Cardiac septum (tissue), 1 donor: ENCODE measurements at regions of chr7 and their contacts with region 1.

Region 1: GRCh38 chr7:38796626-38797501 is 112.1 kb downstream of the VPS41 start:
- DNase-seq: no peak

Region 2: DNA sequence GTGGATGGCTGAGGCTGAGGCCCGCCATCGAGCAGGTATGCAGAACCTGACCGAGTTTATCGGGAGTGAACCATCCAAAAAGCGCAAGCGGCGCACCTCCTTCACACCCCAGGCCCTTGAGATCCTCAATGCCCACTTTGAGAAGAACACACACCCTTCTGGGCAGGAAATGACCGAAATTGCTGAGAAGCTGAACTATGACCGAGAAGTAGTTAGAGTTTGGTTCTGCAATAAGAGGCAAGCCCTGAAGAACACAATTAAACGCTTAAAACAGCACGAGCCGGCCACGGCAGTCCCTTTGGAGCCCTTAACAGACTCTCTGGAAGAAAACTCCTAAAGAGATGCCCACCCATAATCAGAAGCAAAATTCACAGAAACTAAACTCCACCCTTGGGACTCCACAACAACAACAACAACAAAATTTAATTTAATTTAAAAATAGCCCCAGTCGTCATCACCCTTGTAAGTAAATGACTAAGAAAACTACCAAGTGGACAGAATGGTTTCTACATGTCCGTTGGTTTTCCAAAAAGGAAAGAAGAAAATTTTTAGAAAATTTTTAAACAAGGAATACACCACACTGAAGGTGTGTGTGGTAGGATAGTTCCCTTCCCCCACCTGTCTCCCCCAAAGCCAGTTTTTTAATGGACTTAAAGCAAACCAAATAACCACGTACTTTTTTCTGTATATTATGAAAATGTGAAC is 667.6 kb after region 1 on chr7:
- intact Hi-C with region 1: loop called (anchors 5 kb)
- DNase-seq: no peak